ENCODE measurements at regions of chr2 and their contacts with region 1.

Region 1: DNA sequence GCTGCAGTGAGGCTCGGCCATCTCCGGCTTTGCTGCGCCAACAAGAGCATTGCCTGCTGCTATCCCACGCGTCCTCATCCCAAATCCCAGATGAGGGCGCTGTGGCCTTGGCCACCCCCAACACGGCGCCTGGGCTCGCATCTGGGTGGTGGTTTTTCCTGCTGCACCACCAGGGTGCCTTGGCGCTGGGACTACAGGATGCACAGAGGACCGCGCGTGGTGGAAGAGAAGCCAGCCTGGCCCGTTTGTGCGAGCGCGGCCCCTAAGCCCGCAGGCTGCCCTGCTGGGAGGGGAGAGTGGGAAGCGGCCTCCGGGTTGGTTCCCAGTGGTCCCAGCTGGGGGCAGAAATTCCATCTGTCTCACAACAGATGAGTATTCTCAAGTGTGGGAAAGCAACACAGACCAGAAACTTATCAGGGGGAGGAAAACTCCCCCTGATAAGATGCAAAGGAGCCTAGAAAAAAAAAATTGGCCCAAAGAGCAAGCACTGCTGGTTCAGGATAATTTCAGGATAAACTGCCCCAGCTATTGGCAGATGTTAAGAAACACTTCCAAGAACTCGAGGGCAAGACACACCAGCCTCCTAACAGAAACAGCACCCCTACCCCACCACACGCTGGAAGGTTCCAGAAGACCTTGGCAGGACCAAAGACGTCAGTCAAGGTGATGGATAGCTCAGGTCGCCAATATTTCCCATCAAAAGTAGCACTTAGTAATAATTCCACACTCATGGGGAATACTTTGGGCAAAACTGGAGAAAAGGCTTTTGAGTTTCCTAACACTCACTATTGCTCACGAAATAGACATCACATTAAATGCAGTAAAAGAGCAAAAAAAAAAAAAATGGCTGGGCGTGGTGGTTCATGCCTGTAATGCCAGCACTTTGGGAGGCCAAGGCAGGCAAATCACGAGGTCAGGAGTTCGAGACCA is 152.1 kb downstream of the PXDN start:
- DNase-seq: peak in 7 of 10 donors; percentile 26 to 94 (median 53)

Region 2: DNA sequence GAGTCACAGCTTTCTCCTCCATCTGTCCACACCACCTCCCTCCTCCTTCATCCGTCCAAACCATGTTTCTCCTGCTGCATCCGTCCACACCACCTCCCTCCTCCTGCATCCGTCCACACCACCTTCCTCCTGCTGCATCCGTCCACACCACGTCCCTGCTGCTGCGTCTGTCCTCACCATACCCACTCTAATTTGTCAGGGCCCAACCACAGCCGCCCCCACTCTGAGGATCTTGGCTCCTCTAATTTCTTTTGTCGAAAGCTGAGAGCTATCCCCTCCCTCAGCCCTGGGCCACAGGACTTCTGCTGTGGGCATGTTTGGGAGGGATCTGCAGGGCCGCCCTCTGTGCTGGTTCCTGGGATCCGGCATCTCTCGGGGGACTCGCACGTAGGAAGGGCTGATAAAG is 111.6 kb before region 1 on chr2:
- intact Hi-C with region 1: no loop called
- DNase-seq: peak in 2 of 10 donors; percentile 68 to 70

Region 3: GRCh38 chr2:1750933-1751766 is 158.9 kb after region 1 on chr2:
- intact Hi-C with region 1: loop called (anchors 5 kb)
- DNase-seq: peak; percentile 57 to 97 (median 81)